ENCODE measurements at regions of chr17 and their contacts with region 1.

Region 1: GRCh38 chr17:8383143-8383822 is at the start of gene RPL26:
- DNase-seq: peak; percentile 95
- CTCF ChIP-seq: peak; percentile 89

Region 2: DNA sequence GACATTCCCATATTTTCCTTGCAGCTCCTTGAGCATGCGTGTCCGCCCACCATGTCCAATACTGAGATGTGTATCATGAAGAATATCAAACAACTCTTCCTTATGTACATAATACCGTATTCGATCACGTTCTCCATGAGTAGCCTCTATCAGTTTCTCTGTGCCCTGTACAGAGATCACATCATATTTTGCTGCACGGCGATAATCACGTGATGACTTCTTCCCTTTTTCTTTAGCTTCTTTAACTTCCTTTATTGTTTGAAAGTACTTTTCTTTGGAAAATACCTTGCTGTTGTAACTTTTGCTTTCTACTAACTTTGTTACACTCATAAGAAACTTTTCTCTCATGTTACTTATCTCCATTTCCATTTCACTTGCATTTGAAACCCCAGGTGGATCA is 13.3 kb before region 1 on chr17:
- CTCF ChIA-PET with region 1: interaction called, 13 read pairs
- POLR2A ChIA-PET with region 1: interaction called, 4 read pairs
- DNase-seq: no peak
- CTCF ChIP-seq: no peak

Region 3: GRCh38 chr17:8393420-8394241 is 10.3 kb after region 1 on chr17:
- CTCF ChIA-PET with region 1: interaction called, 21 read pairs
- POLR2A ChIA-PET with region 1: no interaction called
- DNase-seq: no peak
- CTCF ChIP-seq: no peak

Region 4: DNA sequence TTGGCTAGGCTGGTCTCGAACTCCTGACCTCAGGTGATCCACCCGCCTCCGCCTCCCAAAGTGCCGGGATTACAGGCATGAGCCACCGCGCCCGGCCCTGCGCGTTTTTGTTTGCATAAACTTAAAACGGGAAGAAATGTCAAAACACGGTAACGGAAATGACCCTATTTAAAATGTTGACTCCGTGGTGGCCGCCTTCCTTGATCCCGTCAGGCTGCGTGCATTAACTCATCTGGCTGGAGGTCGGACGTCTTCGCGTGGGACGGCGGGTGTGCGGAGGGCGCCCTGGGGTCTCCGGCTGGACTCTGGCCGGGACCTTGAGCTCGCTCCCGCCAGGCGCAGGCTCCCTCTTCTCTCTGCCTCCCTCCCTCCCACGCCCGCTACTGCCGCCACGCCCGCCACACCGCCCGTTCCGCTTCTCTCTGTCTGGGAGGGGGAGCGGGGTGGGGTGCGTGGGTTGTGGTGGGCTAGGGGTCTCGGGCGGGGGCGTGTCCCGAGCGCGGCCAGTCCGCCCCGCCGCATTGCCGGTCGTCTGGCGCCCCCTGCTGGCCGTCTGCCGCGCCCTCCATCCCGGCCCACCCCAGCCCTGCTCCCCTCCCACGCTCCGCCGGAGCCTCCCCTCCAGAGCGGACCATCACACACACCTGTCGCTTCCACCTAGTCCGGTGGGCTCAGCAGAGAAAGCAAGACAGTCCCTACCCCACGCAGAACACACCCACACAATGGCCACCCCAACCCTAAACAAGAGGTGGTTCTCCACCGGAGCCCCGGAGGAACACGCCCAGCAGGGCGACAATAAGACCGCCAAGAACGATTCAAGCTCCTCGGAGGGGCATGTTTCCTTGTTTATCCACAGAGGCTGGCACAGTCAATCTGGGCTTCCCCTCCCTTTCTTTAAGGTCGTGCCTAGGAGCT is 362.6 kb after region 1 on chr17:
- CTCF ChIA-PET with region 1: interaction called, 18 read pairs
- POLR2A ChIA-PET with region 1: no interaction called
- DNase-seq: peak; percentile 92
- CTCF ChIP-seq: peak; percentile 79

Measured in GM10248 (cell line).